CD4-positive, alpha-beta memory T cell (primary cell): ENCODE measurements at regions of chr1 and their contacts with region 1.

Region 1: GRCh38 chr1:151059078-151059907 is at the start of gene CDC42SE1:
- DNase-seq: peak; percentile 81 to 85 (median 85)
- H3K4me3 ChIP-seq: peak within 1 kb of the TSS; percentile 89 to 93
- H3K4me3 Mint-ChIP-seq: peak within 1 kb of the TSS; percentile 96 to 100 (median 100)
- H3K27ac ChIP-seq: peak within 1 kb of the TSS; percentile 90
- H3K27ac Mint-ChIP-seq: peak within 1 kb of the TSS; percentile 98 to 100 (median 99)
- H3K4me1 ChIP-seq: peaks cover 45% of the 10 kb centered on the region
- H3K4me1 Mint-ChIP-seq: peaks cover 31 to 70% (median 38%) of the 10 kb centered on the region in 4 donors
- H3K27me3 ChIP-seq: no peaks in the 10 kb centered on the region
- H3K27me3 Mint-ChIP-seq: peaks cover 0 to 1% of the 10 kb centered on the region in 2 donors
- total RNA-seq, gene CDC42SE1: 478 to 483 TPM

Region 2: DNA sequence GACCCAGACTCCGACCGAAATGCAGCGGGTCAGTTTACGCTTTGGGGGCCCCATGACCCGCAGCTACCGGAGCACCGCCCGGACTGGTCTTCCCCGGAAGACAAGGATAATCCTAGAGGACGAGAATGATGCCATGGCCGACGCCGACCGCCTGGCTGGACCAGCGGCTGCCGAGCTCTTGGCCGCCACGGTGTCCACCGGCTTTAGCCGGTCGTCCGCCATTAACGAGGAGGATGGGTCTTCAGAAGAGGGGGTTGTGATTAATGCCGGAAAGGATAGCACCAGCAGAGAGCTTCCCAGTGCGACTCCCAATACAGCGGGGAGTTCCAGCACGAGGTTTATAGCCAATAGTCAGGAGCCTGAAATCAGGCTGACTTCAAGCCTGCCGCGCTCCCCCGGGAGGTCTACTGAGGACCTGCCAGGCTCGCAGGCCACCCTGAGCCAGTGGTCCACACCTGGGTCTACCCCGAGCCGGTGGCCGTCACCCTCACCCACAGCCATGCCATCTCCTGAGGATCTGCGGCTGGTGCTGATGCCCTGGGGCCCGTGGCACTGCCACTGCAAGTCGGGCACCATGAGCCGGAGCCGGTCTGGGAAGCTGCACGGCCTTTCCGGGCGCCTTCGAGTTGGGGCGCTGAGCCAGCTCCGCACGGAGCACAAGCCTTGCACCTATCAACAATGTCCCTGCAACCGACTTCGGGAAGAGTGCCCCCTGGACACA is 11.2 kb before region 1 on chr1:
- CTCF ChIA-PET with region 1: interaction called, 76 read pairs
- POLR2A ChIA-PET with region 1: interaction called, 325 read pairs
- intact Hi-C with region 1: loop called (anchors 1 kb)
- DNase-seq: peak; percentile 59 to 72 (median 64)
- H3K4me3 ChIP-seq: peak overlapping the region; percentile 59 to 74
- H3K4me3 Mint-ChIP-seq: peak overlapping the region; percentile 86 to 95 (median 90)
- H3K27ac ChIP-seq: peak overlapping the region; percentile 74
- H3K27ac Mint-ChIP-seq: peak overlapping the region; percentile 88 to 98 (median 93)
- H3K4me1 ChIP-seq: peaks cover 38% of the 10 kb centered on the region
- H3K4me1 Mint-ChIP-seq: peaks cover 35 to 81% (median 61%) of the 10 kb centered on the region in 4 donors
- H3K27me3 ChIP-seq: no peaks in the 10 kb centered on the region
- H3K27me3 Mint-ChIP-seq: no peaks in the 10 kb centered on the region